HCT116 (cell line): ENCODE measurements at regions of chr14 and their contacts with region 1.

Region 1: GRCh38 chr14:104137297-104138097 is 890 bp upstream of the KIF26A start:
- DNase-seq: no peak
- ATAC-seq: peak; percentile 76
- H3K4me3 ChIP-seq: peak overlapping the region; percentile 71 to 81
- H3K27ac ChIP-seq: peak overlapping the region; percentile 86; the same call in 1 of the 2 replicates
- H3K4me1 ChIP-seq: peaks cover 10 to 29% of the 10 kb centered on the region in 2 experiments; a peak in 3 of 4 replicates
- H3K27me3 ChIP-seq: no peaks in the 10 kb centered on the region
- CTCF ChIP-seq: peak; percentile 70 to 89 (median 76)
- POLR2A ChIP-seq: no peak
- RAD21 ChIP-seq: peak; percentile 93

Region 2: DNA sequence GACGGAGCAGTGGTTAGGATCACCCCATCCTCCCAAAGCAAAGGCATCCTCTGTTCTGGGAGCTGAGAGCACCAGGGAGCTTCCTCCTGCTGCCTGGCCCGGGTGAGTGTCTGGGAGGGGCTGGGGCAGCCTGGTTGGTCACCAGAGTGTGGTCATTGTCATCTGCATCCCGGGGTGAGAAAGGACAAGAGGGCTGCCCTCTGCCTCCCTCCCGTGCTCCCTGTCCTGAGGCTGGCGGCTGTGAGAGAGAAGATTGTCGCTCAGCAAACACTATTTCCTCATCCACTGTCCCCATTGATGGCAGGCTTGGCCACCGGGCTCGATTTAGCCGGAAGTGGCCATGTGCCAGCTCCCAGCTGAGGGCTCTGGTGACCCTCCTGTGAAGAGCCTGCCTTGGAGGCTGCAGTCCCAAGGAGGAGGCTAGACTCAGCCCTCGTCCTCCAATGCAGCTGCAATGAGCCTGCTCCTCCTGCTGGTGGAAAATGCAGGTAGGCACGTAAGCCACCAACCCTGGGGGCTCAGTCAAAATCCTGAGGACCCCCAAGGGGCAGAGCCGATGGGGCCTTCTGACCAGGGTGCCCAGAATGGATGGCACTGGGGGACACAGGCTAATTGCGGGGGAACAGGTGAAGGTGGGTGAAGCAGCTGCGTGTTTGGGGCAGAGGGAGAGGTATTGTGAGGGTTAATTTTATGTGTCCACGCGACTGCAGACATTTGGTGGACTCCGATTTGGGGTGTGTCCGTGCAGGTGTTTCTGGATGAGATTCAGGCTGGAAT is 156.5 kb after region 1 on chr14:
- CTCF ChIA-PET with region 1: no interaction called
- POLR2A ChIA-PET with region 1: no interaction called
- RAD21 ChIA-PET with region 1: no interaction called
- intact Hi-C with region 1: loop called (anchors 1 kb)
- DNase-seq: no peak
- ATAC-seq: peak; percentile 68
- H3K4me3 ChIP-seq: no peak overlapping the region
- H3K27ac ChIP-seq: no peak overlapping the region
- H3K4me1 ChIP-seq: no peaks in the 10 kb centered on the region; a peak in 1 of 4 replicates
- H3K27me3 ChIP-seq: no peaks in the 10 kb centered on the region
- CTCF ChIP-seq: peak; percentile 43 to 59 (median 55); a peak in 5 of 6 replicates
- POLR2A ChIP-seq: no peak
- RAD21 ChIP-seq: peak; percentile 70

Region 3: GRCh38 chr14:104341532-104342434 is 204.3 kb after region 1 on chr14:
- CTCF ChIA-PET with region 1: no interaction called
- POLR2A ChIA-PET with region 1: no interaction called
- RAD21 ChIA-PET with region 1: no interaction called
- intact Hi-C with region 1: loop called (anchors 1 kb)
- DNase-seq: peak; percentile 88
- ATAC-seq: peak; percentile 97
- H3K4me3 ChIP-seq: peak overlapping the region; percentile 45 to 60
- H3K27ac ChIP-seq: no peak overlapping the region
- H3K4me1 ChIP-seq: peaks cover 4 to 12% of the 10 kb centered on the region in 2 experiments; a peak in 3 of 4 replicates
- H3K27me3 ChIP-seq: no peaks in the 10 kb centered on the region; the same call in 1 of the 2 replicates
- CTCF ChIP-seq: peak; percentile 71 to 92 (median 84)
- POLR2A ChIP-seq: no peak
- RAD21 ChIP-seq: peak; percentile 48

Region 4: DNA sequence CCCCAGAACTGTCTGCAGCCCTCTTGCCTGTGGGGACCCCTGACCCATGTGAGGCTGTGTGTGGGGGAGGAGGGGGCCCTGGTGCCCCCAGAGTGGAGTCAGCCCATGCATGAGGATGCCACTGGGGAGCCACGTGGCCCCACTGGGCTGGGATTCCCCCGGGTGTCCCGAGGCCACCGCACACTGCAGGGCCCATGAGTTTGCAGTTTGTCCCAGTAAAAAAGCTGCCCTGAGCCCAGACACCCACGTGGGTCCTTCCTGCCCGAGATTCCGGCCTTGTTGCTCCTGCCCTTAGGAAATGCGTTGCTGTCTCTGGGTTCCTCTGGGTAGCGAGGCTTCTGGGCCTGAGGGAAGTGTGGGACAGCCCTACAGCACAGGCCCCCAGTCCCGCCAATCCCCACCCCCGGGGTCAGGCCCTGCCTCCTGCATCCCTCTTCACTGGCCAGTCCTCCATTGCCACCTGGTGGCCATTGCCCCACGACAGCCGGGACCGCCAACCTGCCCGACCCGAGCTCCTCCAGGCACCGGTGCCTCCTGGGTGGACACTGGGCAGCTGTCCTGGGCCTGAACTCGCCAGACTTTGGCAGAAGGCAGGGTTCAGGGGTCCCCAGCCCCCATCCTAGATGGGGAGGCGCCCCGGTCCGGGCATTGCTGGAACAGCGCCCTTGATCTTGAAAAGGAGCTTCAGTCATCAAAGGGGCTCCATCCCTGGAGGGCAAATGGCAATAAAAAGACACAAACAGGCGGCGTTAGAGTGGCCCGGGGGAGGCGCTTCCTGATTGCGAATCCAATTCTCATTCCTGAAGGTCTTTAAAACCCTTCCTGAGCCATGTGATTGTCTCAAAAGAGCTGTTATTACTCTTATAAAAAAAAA is 426.5 kb after region 1 on chr14:
- CTCF ChIA-PET with region 1: interaction called, 23 read pairs
- POLR2A ChIA-PET with region 1: no interaction called
- RAD21 ChIA-PET with region 1: interaction called, 5 to 6 read pairs
- intact Hi-C with region 1: loop called (anchors 1 kb)
- DNase-seq: peak; percentile 51
- ATAC-seq: peak; percentile 95
- H3K4me3 ChIP-seq: no peak overlapping the region
- H3K27ac ChIP-seq: no peak overlapping the region
- H3K4me1 ChIP-seq: peaks cover 0 to 9% of the 10 kb centered on the region in 2 experiments; a peak in 2 of 4 replicates
- H3K27me3 ChIP-seq: no peaks in the 10 kb centered on the region
- CTCF ChIP-seq: peak; percentile 89 to 94 (median 93)
- POLR2A ChIP-seq: no peak
- RAD21 ChIP-seq: peak; percentile 98

Region 5: GRCh38 chr14:104639889-104640548 is 502.5 kb after region 1 on chr14:
- CTCF ChIA-PET with region 1: interaction called, 7 read pairs
- POLR2A ChIA-PET with region 1: no interaction called
- RAD21 ChIA-PET with region 1: no interaction called
- intact Hi-C with region 1: loop called (anchors 1 kb)
- DNase-seq: peak; percentile 27
- ATAC-seq: peak; percentile 99
- H3K4me3 ChIP-seq: 0 out of 4 replicates have a peak overlapping the region, but pooled peaks of 1 of the 2 experiments have one; percentile 5
- H3K27ac ChIP-seq: no peak overlapping the region; the same call in 1 of the 2 replicates
- H3K4me1 ChIP-seq: peaks cover 4 to 6% of the 10 kb centered on the region in 2 experiments
- H3K27me3 ChIP-seq: peaks cover 5% of the 10 kb centered on the region; the same call in 1 of the 2 replicates
- CTCF ChIP-seq: peak; percentile 89 to 98 (median 96)
- POLR2A ChIP-seq: no peak
- RAD21 ChIP-seq: peak; percentile 98

Region 6: DNA sequence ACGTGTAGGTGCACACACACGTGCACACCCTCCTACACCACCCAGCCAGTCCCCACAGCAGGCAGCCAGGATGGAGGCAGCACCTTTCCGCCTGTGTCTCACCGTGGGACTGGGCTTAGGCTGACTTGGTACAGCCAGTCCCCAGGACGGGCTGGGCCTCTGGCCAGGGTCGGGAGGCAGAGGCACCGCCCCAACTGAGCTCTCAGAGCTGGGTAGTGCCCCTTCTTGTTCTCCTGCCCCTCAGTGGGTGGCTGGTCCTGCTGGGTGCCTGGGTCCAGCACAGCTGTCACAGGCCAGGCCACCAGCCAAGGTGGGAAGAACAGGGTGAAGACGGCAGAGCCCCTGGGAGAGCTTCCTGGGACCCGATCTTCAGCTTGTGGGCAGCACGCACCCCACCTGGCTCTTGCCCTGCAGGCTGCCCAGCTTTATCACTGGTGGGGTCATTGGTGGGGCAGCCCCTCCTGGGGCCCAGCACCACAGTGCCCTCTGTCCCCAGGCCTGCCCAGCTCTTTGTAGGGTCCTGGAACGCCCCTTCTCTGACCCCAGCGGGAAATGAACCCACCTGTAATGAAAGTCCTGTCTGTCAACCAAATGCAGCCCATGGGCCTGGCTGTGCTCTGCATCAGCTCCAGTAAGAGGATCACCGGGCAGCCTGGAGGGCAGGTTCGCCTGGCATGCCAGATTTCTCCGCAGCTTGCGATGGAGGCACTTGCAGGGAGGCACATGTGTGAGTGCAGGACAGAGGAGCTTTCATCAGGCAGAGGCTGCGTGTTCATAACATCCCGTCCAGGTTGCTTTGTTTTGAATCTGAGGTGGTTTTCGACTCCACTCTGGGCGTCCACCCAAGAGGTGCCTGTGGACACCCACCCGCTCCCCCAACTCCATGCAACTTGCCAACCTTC is 868.7 kb after region 1 on chr14:
- CTCF ChIA-PET with region 1: no interaction called
- POLR2A ChIA-PET with region 1: no interaction called
- RAD21 ChIA-PET with region 1: no interaction called
- intact Hi-C with region 1: no loop called
- DNase-seq: no peak
- ATAC-seq: peak; percentile 41
- H3K4me3 ChIP-seq: no peak overlapping the region
- H3K27ac ChIP-seq: no peak overlapping the region
- H3K4me1 ChIP-seq: no peaks in the 10 kb centered on the region
- H3K27me3 ChIP-seq: no peaks in the 10 kb centered on the region
- CTCF ChIP-seq: no peak
- POLR2A ChIP-seq: no peak
- RAD21 ChIP-seq: no peak